CD4-positive, alpha-beta T cell (primary cell): ENCODE measurements at regions of chr17 and their contacts with region 1.

Region 1: DNA sequence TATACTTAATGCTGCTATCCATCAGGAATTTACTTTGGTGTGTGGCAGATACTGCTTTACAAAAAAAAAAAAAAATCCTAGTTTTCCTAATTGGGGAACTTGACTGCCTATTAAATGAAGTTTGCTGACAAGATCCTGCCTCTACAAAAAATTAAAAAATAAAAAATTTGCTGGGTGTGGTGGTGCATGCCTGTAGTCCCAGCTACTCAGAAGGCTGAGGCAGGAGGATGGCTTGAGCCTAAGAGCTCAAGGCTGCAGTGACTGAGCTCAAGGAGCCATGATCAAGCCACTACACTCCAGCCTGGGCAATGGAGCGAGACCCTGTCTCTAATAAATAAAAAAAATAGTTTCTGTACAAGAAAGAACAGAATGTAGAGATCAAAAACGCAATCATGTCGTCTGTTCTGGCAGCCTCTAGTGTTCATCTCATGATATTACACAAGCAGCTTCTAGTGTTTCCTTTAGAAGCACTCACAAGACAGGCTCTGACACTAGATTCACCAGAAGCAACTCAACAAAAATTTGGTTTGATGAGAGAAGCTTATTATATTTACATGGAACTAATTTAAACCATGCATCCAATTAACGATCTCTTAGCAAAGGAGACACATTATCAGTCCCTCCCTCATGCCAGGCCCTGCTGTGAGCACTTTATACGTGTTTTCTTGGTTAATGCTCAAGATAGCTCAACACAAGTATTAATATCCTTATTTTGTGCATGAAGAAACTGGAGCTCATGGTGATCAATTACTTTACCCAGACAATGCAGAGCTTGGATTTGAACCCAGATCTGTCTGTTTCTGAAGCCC is 6.8 kb upstream of the KRTAP17-1 start:
- DNase-seq: peak in 4 of 14 experiments; percentile 33 to 75 (median 70)
- ATAC-seq: peak; percentile 87
- H3K4me3 ChIP-seq: no peak overlapping the region
- H3K4me3 Mint-ChIP-seq: peak overlapping the region; percentile 23
- H3K27ac ChIP-seq: no peak overlapping the region
- H3K27ac Mint-ChIP-seq: peak overlapping the region; percentile 89
- H3K4me1 ChIP-seq: peaks cover 54% of the 10 kb centered on the region
- H3K4me1 Mint-ChIP-seq: peaks cover 59% of the 10 kb centered on the region
- H3K27me3 ChIP-seq: no peaks in the 10 kb centered on the region
- H3K27me3 Mint-ChIP-seq: no peaks in the 10 kb centered on the region
- CTCF ChIP-seq: peak; percentile 88

Region 2: DNA sequence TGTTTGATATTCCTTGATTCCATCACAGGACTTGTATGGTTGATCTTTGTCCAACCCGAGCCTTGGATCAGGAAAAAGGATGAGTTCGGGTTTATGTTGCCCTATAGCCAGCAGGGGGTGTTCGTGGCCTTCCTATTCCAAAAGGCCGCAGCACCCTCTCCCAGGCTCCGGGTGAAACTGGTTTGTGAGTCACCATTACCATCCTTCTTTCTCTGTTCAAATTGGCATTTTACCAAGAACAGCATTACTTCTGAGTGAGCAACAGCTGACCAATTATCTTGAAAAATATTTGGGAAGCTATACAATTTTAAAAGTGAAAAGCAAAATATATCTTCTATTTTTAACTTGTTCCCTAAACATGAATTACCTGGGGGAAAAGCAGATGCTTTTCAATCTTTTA is 412.9 kb before region 1 on chr17:
- CTCF ChIA-PET with region 1: no interaction called
- POLR2A ChIA-PET with region 1: no interaction called
- intact Hi-C with region 1: loop called (anchors 1 to 2 kb)
- DNase-seq: peak; percentile 38 to 85 (median 58)
- ATAC-seq: peak; percentile 91
- H3K4me3 ChIP-seq: no peak overlapping the region
- H3K4me3 Mint-ChIP-seq: no peak overlapping the region
- H3K27ac ChIP-seq: no peak overlapping the region
- H3K27ac Mint-ChIP-seq: no peak overlapping the region
- H3K4me1 ChIP-seq: no peaks in the 10 kb centered on the region
- H3K4me1 Mint-ChIP-seq: no peaks in the 10 kb centered on the region
- H3K27me3 ChIP-seq: peaks cover 2 to 25% of the 10 kb centered on the region in 2 experiments
- H3K27me3 Mint-ChIP-seq: peaks cover 59% of the 10 kb centered on the region
- CTCF ChIP-seq: peak; percentile 82

Region 3: GRCh38 chr17:41116297-41116696 is 206.0 kb before region 1 on chr17:
- CTCF ChIA-PET with region 1: no interaction called
- POLR2A ChIA-PET with region 1: no interaction called
- intact Hi-C with region 1: loop called (anchors 1 to 5 kb)
- DNase-seq: peak in 1 of 14 experiments; percentile 14
- ATAC-seq: no peak
- H3K4me3 ChIP-seq: no peak overlapping the region
- H3K4me3 Mint-ChIP-seq: no peak overlapping the region
- H3K27ac ChIP-seq: no peak overlapping the region
- H3K27ac Mint-ChIP-seq: no peak overlapping the region
- H3K4me1 ChIP-seq: peaks cover 6% of the 10 kb centered on the region
- H3K4me1 Mint-ChIP-seq: peaks cover 31% of the 10 kb centered on the region
- H3K27me3 ChIP-seq: no peaks in the 10 kb centered on the region
- H3K27me3 Mint-ChIP-seq: no peaks in the 10 kb centered on the region
- CTCF ChIP-seq: no peak

Region 4: DNA sequence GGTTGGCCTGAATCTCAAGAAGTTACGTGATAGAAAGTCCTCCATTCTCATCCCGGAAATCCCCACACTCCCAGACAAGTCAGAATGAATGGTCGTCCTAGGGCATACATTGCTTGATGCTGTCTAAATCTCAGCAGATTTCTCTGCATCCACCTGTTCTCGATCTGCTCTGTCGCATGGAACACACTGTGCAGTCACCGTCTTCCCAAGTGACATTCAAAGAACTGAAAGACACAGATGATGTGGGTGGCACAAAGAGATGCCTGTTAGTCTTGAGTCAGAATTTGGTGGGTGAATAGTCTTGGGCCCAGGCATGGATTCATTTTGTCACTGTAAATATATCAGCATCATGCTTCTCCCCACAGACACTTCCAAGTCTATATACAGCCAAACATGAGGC is 90.6 kb before region 1 on chr17:
- CTCF ChIA-PET with region 1: no interaction called
- POLR2A ChIA-PET with region 1: no interaction called
- intact Hi-C with region 1: loop called in 1 of 2 experiments (anchors 5 kb)
- DNase-seq: no peak
- ATAC-seq: no peak
- H3K4me3 ChIP-seq: no peak overlapping the region
- H3K4me3 Mint-ChIP-seq: no peak overlapping the region
- H3K27ac ChIP-seq: no peak overlapping the region
- H3K27ac Mint-ChIP-seq: no peak overlapping the region
- H3K4me1 ChIP-seq: no peaks in the 10 kb centered on the region
- H3K4me1 Mint-ChIP-seq: no peaks in the 10 kb centered on the region
- H3K27me3 ChIP-seq: no peaks in the 10 kb centered on the region
- H3K27me3 Mint-ChIP-seq: peaks cover 27% of the 10 kb centered on the region
- CTCF ChIP-seq: no peak

Region 5: GRCh38 chr17:41308251-41308917 is 13.9 kb before region 1 on chr17:
- CTCF ChIA-PET with region 1: interaction called, 23 read pairs
- POLR2A ChIA-PET with region 1: interaction called, 38 read pairs
- intact Hi-C with region 1: loop called in 1 of 2 experiments (anchors 1 kb)
- DNase-seq: peak; percentile 71 to 96 (median 84)
- ATAC-seq: peak; percentile 82
- H3K4me3 ChIP-seq: peak overlapping the region; percentile 36
- H3K4me3 Mint-ChIP-seq: peak overlapping the region; percentile 81
- H3K27ac ChIP-seq: peak overlapping the region; percentile 69 to 83
- H3K27ac Mint-ChIP-seq: peak overlapping the region; percentile 98
- H3K4me1 ChIP-seq: peaks cover 55% of the 10 kb centered on the region
- H3K4me1 Mint-ChIP-seq: peaks cover 69% of the 10 kb centered on the region
- H3K27me3 ChIP-seq: no peaks in the 10 kb centered on the region
- H3K27me3 Mint-ChIP-seq: no peaks in the 10 kb centered on the region
- CTCF ChIP-seq: no peak

Region 6: GRCh38 chr17:41496820-41497408 is 174.6 kb after region 1 on chr17:
- CTCF ChIA-PET with region 1: interaction called, 4 read pairs
- POLR2A ChIA-PET with region 1: no interaction called
- intact Hi-C with region 1: loop called in 1 of 2 experiments (anchors 10 kb)
- DNase-seq: peak; percentile 19 to 82 (median 44)
- ATAC-seq: peak; percentile 88
- H3K4me3 ChIP-seq: no peak overlapping the region
- H3K4me3 Mint-ChIP-seq: no peak overlapping the region
- H3K27ac ChIP-seq: no peak overlapping the region
- H3K27ac Mint-ChIP-seq: no peak overlapping the region
- H3K4me1 ChIP-seq: peaks cover 27% of the 10 kb centered on the region
- H3K4me1 Mint-ChIP-seq: peaks cover 25% of the 10 kb centered on the region
- H3K27me3 ChIP-seq: no peaks in the 10 kb centered on the region
- H3K27me3 Mint-ChIP-seq: no peaks in the 10 kb centered on the region
- CTCF ChIP-seq: peak; percentile 41